ENCODE measurements at regions of chr12 and their contacts with region 1.

Region 1: GRCh38 chr12:68469113-68469512 is 137.0 kb upstream of the MDM1 start:
- DNase-seq: no peak
- H3K4me3 ChIP-seq: no peak overlapping the region
- H3K27ac ChIP-seq: no peak overlapping the region
- H3K27me3 ChIP-seq: no peaks in the 10 kb centered on the region
- CTCF ChIP-seq: no peak

Region 2: DNA sequence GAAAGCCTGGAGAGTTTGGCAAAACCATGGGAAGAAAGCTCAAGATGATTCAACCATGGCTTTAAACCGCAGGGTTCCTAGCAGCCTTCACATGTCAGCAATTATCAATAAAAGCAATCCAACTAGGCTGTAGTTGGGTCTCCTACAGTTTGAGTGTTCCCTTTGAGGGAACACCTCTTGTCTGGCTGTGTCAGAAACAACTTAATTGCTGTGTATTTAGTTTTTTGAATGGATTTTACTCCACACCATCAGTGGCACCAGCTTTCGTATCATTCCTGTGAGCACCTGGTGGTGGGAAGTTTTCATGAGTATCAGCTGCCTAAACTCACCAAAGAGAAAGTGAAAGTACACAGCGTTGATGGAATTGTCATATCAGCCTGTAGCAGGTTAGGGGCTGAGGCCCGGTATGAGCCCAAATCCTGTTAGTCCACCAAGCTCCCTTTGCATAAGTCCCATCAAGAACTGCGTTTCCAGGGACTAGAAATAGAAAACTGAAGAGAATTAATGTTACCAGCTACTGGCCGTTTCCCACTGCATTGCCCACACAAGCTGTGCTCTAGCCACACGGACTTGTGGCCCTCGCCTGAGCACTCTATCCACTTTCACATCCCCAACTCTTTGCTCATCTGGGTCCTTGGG is 232.6 kb before region 1 on chr12:
- CTCF ChIA-PET with region 1: no interaction called
- POLR2A ChIA-PET with region 1: no interaction called
- DNase-seq: no peak
- H3K4me3 ChIP-seq: no peak overlapping the region
- H3K27ac ChIP-seq: no peak overlapping the region
- H3K27me3 ChIP-seq: peaks cover 4% of the 10 kb centered on the region
- CTCF ChIP-seq: no peak

Region 3: DNA sequence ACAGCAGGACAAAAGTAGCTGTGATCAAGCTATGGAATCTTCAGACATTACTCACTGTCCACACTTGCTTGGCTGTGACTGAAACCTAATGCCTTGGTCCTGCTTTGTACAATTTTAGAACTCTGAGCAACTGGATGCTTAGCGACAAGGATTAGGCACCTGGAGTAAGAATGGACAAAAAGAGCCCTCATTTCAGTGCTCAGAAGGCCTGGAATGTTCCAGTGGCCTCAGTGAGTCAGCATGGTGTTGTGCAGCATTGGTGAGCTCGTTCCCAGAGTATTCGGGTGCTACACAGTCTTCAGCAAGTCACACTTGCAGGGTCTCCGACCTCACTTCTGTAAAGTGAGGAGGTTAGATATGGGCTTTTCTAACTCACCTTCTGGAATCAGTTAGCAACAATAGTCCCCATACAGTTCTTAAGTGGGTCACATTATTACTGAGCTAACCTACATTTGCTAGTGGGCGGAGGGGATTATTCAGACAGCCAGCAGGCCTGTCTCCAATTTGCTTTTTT is 29.0 kb before region 1 on chr12:
- CTCF ChIA-PET with region 1: interaction called, 10 read pairs
- POLR2A ChIA-PET with region 1: no interaction called
- DNase-seq: no peak
- H3K4me3 ChIP-seq: no peak overlapping the region
- H3K27ac ChIP-seq: no peak overlapping the region
- H3K27me3 ChIP-seq: no peaks in the 10 kb centered on the region
- CTCF ChIP-seq: no peak

Region 4: GRCh38 chr12:68745904-68746571 is 276.9 kb after region 1 on chr12 and contains the start of gene SLC35E3:
- CTCF ChIA-PET with region 1: no interaction called
- POLR2A ChIA-PET with region 1: no interaction called
- DNase-seq: peak; percentile 37
- H3K4me3 ChIP-seq: peak within 1 kb of the TSS; percentile 81
- H3K27ac ChIP-seq: no peak within 1 kb of the TSS
- H3K27me3 ChIP-seq: no peaks in the 10 kb centered on the region
- CTCF ChIP-seq: no peak
- polyA plus RNA-seq, gene SLC35E3: 7.7 and 9.2 TPM in 2 replicates